Mammary epithelial cell (primary cell): ENCODE measurements at regions of chr12 and their contacts with region 1.

Region 1: DNA sequence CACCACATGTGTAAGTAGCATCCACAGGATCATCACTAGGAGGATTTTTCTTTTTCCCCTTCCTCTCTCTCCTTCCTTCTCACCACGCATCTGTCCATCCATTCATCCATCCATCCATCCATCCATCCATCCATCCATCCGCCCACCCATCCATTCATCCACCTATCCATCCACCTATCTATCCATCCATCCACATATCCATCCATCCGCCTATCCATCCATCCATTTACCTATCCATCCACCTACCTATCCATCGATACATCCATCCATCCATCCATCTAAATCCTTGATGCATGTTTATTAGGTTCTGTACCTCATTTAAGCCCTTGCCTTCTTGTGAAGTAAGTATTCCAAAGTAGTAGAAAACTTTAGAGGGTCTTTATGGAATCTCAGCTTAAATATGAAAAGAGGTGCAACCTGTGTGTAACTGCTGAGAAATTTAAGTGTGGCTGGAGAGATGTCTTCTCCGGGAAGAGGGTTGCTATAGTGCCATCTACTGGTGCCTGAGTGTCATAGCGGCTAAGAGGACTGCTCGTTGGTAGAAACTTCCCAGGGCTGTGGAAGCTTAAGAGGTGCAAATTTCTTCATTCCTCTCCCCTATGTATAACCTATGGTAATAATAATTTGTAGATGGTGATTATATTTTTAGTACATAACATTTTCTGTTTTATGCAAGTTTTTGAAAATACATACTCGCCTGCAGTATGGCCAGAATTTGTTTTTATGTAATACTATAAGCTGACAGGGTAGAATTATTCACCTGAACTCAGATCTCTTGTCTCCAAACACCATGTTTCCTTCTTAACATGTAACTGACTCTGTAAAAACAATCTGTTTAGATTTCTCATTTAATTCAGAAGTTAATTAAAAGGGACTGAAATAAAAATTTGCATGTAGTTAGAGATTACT is 46.0 kb downstream of the MYO1H start:
- DNase-seq: peak; percentile 41
- H3K4me3 ChIP-seq: no peak overlapping the region
- H3K27ac ChIP-seq: no peak overlapping the region
- H3K4me1 ChIP-seq: no peaks in the 10 kb centered on the region
- H3K27me3 ChIP-seq: no peaks in the 10 kb centered on the region
- CTCF ChIP-seq: peak; percentile 89 to 93

Region 2: GRCh38 chr12:109110988-109111495 is 282.6 kb before region 1 on chr12:
- CTCF ChIA-PET with region 1: interaction called, 7 read pairs
- dilution Hi-C with region 1: loop called (anchors 25 kb)
- in situ Hi-C with region 1: loop called (anchors 5 to 10 kb)
- intact Hi-C with region 1: no loop called
- DNase-seq: peak; percentile 65
- H3K4me3 ChIP-seq: peak overlapping the region; percentile 23 to 52 (median 37)
- H3K27ac ChIP-seq: peak overlapping the region; percentile 33
- H3K4me1 ChIP-seq: peaks cover 11% of the 10 kb centered on the region
- H3K27me3 ChIP-seq: no peaks in the 10 kb centered on the region
- CTCF ChIP-seq: no peak

Region 3: DNA sequence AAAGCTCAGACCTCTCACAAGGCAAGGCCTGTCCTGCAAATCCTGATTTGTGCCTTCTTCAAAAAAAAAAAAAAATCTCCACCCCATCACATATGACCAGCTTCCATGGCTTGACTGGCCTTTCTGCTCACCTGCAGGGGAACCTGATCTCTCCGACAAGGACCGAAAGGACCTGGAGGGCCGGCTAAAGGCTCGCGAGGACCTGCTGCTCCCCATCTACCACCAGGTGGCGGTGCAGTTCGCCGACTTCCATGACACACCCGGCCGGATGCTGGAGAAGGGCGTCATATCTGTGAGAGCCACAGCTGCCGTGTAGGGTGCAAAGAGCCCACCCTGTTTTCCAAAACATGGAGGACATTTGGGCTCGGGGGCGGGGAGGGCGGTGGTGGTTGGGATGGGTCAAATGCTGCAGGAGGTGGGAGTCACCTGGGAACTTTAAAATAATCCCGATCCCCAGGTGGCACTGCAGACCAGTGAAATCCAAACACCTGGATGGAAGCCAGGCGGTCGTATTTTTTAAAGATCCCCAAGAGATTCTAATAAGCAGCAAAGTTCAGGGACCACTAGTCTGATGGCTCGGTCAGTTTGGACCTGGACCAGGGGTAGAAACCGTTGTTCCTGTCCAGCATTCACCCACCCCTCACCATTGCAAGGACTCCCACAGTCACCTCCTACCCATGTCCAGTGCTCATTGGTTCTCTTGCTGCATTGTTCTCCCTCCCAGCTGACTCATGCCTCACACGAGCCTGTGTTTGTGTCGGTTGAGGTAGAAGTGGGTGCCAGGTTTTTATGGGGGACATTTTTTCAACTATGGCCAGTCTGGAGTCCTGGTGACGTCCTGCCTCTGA is 129.4 kb before region 1 on chr12:
- CTCF ChIA-PET with region 1: no interaction called
- dilution Hi-C with region 1: no loop called
- in situ Hi-C with region 1: loop called (anchors 5 to 10 kb)
- intact Hi-C with region 1: loop called (anchors 2 kb)
- DNase-seq: peak; percentile 30
- H3K4me3 ChIP-seq: no peak overlapping the region
- H3K27ac ChIP-seq: no peak overlapping the region
- H3K4me1 ChIP-seq: no peaks in the 10 kb centered on the region
- H3K27me3 ChIP-seq: no peaks in the 10 kb centered on the region
- CTCF ChIP-seq: peak; percentile 58 to 82

Region 4: DNA sequence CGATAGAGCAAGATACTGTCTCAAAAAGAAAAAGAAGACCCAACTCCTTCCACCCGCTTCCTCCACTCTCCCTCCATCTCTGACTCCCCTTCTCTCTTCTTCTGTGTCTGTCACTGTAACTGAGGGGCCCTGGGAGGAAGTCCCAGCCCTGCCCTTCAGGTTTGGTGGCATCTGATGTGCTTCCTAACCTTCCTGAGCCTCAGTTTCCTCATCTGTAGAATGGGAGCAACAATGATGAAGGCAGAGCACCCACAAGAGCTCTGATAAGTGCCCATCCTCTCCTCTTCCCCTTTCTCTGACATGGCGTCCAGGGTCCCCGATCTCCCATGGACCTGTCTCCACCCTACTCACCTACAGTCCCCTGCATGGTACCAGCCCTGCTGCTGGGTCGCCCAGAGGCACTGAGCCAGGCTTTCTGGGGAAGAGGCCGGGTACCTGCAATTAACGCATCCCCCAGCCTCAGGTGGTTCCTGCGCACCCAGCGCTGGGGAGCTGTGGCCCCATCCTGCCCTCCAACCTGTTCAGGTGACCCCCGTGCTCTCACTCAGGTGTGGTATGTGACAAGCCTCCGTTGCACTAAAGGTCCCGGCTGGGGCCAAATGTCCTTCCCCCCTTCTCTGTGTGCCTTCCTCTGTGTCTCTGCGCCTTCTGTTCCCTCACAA is 97.8 kb before region 1 on chr12:
- CTCF ChIA-PET with region 1: no interaction called
- dilution Hi-C with region 1: loop called (anchors 5 kb)
- in situ Hi-C with region 1: no loop called
- intact Hi-C with region 1: loop called (anchors 5 kb)
- DNase-seq: no peak
- H3K4me3 ChIP-seq: no peak overlapping the region
- H3K27ac ChIP-seq: no peak overlapping the region
- H3K4me1 ChIP-seq: peaks cover 2% of the 10 kb centered on the region
- H3K27me3 ChIP-seq: peaks cover 3% of the 10 kb centered on the region
- CTCF ChIP-seq: no peak

Region 5: DNA sequence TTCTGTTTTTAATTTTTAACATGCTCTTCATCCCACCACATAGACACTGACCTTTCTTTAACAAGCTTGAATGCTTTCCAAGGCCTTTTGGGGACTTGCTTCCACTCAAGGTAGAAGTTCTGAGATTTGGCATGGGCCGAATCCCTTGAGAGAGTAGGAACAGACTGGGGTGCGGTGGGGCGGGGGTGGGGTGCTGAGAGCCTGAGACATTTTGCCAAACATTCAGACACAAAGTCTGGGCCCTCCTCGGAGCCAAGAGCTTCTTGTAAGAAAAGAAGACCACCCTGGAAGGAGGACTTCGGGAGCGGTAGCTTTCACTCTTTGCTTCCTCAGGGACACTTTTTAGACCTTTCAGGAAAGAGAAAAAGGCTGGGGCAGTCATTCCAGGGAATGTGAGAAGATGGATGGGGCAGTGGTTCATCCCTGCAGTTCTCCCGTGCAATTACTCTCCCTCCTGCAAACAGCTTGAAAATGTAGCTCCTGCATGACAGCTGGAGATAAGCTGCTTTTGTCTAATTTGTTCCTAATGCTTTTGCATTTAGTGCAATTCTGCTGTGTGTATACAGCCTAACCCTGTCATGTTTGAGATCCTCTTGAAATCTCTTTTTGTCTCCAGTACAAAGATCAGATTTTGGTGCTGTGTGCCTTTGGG is 62.3 kb before region 1 on chr12:
- CTCF ChIA-PET with region 1: no interaction called
- dilution Hi-C with region 1: loop called (anchors 10 kb)
- in situ Hi-C with region 1: no loop called
- intact Hi-C with region 1: no loop called
- DNase-seq: no peak
- H3K4me3 ChIP-seq: no peak overlapping the region
- H3K27ac ChIP-seq: no peak overlapping the region
- H3K4me1 ChIP-seq: no peaks in the 10 kb centered on the region
- H3K27me3 ChIP-seq: no peaks in the 10 kb centered on the region
- CTCF ChIP-seq: no peak

Region 6: DNA sequence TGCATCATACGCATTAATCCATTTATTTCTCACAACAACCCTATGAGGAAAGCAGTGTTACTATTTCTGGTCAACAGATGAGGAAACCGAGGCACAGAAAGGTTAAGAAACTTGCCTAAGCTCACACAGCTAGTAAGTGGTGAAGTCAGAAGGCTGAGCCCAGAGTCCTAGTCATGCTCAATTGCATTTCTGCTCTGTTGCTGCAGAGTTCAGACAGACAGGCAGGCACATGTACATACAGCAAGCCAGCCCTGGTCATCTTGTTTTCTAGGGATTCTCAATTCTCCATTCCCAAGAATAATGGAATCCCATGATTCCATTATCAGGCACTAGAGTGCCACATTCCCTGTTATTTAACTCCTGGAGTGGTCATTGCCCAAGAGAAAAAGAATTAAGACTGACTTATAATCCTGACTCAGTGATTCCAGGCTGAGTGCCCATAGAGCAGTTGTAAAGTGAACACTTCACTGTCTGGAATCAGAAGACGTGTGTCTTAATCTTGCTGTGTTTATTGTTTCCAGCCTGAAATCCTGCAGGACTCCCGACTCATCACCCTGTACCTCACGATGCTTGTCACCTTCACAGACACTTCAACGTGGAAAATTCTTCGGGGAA is 94.5 kb after region 1 on chr12:
- CTCF ChIA-PET with region 1: no interaction called
- dilution Hi-C with region 1: no loop called
- in situ Hi-C with region 1: no loop called
- intact Hi-C with region 1: no loop called
- DNase-seq: no peak
- H3K4me3 ChIP-seq: no peak overlapping the region
- H3K27ac ChIP-seq: no peak overlapping the region
- H3K4me1 ChIP-seq: no peaks in the 10 kb centered on the region
- H3K27me3 ChIP-seq: no peaks in the 10 kb centered on the region
- CTCF ChIP-seq: no peak

Region 7: GRCh38 chr12:109518820-109519665 is 125.4 kb after region 1 on chr12:
- CTCF ChIA-PET with region 1: no interaction called
- dilution Hi-C with region 1: no loop called
- in situ Hi-C with region 1: no loop called
- intact Hi-C with region 1: no loop called
- DNase-seq: peak; percentile 31
- H3K4me3 ChIP-seq: no peak overlapping the region
- H3K27ac ChIP-seq: no peak overlapping the region
- H3K4me1 ChIP-seq: no peaks in the 10 kb centered on the region
- H3K27me3 ChIP-seq: no peaks in the 10 kb centered on the region
- CTCF ChIP-seq: peak; percentile 87 to 89